ENCODE measurements at regions of chr5 and their contacts with region 1.

Region 1: DNA sequence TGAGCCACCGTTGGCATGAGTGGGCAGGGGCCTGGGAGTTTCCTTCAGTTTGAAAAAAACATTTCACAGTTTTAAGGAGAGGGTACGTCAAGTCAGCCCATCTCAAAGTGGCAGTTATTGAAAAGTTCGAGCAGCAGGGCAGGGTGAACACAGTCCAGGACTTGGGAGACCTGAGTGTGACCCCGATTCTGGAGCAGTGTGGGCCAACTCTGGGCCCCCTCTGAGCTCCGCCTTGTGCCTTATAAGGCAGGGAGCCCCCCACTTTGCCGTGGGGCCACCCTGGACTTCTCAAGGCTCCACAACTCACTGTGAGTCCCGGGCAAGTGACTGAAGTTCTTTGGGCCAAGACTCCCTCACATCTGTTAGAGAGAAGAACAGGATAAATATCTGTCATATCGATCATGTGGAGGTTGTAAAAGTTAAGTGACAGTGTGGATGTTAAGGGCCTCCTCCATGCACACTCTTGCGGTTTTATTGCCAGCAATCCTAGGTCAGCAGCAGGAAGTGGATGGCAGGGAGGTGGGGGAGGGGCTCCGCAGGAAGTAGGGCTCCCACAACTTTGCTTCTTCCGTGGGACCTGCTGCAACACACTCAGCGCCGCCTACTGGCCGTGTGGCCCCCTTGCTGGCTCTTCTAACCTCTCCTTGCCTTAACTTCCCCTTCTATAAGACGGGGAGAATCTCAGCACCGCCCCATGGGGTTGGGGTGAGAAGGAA is 38.4 kb downstream of the HRH2 start:
- DNase-seq: peak; percentile 55
- H3K4me3 ChIP-seq: no peak overlapping the region
- H3K27ac ChIP-seq: no peak overlapping the region
- H3K4me1 ChIP-seq: peaks cover 0 to 3% of the 10 kb centered on the region in 2 experiments; a peak in 1 of 4 replicates
- H3K27me3 ChIP-seq: no peaks in the 10 kb centered on the region
- CTCF ChIP-seq: peak; percentile 29
- EP300 ChIP-seq: no peak
- RAD21 ChIP-seq: peak; percentile 27; the same call in 1 of the 2 replicates

Region 2: DNA sequence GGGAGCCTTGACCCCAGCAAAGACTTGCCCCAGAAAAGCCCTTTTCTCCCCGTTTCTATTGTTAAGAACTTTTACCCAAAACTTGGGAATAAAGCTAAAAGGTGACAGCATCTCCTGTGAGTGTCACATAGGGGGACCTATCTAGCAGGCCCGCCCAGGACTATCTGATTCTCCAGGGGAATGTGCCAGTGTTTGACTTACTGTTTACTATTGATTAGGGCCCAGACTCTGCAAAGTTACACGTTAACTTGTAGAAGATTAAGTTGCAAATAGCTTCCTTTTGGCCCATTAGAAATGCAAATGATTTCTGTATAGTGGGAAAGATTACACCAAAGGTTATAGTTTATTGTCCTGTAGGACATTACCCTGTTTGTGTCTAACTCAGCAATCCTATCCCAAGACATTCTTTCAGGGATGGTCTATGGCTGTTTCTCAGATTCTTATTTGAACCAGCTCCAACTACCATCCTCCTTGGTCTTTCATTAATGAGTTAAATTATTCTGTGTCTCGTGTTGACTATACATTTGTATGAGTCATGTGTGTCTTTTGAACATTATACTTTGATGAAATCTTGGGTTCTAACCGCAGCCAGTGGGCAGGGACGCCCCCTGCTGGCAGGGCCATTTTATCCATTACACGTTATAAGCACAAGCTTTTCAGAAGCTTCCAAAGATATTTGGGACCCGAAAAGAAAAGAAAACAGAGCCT is 22.3 kb after region 1 on chr5:
- CTCF ChIA-PET with region 1: interaction called, 13 read pairs
- POLR2A ChIA-PET with region 1: no interaction called
- DNase-seq: no peak
- H3K4me3 ChIP-seq: no peak overlapping the region
- H3K27ac ChIP-seq: no peak overlapping the region
- H3K4me1 ChIP-seq: no peaks in the 10 kb centered on the region; a peak in 1 of 4 replicates
- H3K27me3 ChIP-seq: no peaks in the 10 kb centered on the region
- CTCF ChIP-seq: peak; percentile 51
- EP300 ChIP-seq: no peak
- RAD21 ChIP-seq: peak; percentile 65

Measured in SK-N-SH (cell line).